ENCODE measurements at regions of chr3 and their contacts with region 1.

Region 1: DNA sequence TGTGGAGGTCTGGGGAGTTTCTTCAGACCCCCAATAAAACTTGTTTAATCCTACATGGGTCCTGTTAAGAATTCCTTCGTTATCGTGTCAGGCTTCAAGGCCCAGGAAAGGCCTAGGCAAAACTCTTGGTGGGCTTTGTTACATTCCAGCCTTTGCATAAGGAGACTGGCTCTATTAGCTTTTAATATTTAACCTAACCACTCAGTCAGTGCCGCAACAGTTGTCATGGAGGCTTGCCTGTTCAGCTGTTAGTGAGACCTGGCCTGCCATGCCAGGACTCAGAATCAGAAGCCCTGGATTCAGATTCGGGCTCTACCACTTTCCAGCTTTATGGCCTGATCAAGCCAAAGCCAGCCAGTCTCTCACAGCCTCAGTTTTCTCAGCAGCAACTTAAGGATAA is 19.6 kb downstream of the EIF1B start:
- DNase-seq: no peak
- H3K4me3 ChIP-seq: no peak overlapping the region
- H3K27ac ChIP-seq: no peak overlapping the region
- H3K4me1 ChIP-seq: no peaks in the 10 kb centered on the region
- H3K27me3 ChIP-seq: no peaks in the 10 kb centered on the region
- CTCF ChIP-seq: no peak

Region 2: GRCh38 chr3:41881233-41881821 is 1552.3 kb after region 1 on chr3:
- CTCF ChIA-PET with region 1: no interaction called
- POLR2A ChIA-PET with region 1: no interaction called
- intact Hi-C with region 1: loop called (anchors 5 kb)
- DNase-seq: peak; percentile 28
- H3K4me3 ChIP-seq: no peak overlapping the region
- H3K27ac ChIP-seq: no peak overlapping the region
- H3K4me1 ChIP-seq: no peaks in the 10 kb centered on the region
- H3K27me3 ChIP-seq: no peaks in the 10 kb centered on the region
- CTCF ChIP-seq: peak; percentile 56

Measured in A673 (cell line).